CD4-positive, alpha-beta T cell (primary cell): ENCODE measurements at regions of chr17 and their contacts with region 1.

Region 1: GRCh38 chr17:75855310-75856081 is at the start of gene WBP2:
- DNase-seq: peak; percentile 92 to 100 (median 95)
- ATAC-seq: peak; percentile 91
- H3K4me3 ChIP-seq: peak within 1 kb of the TSS; percentile 82
- H3K4me3 Mint-ChIP-seq: peak within 1 kb of the TSS; percentile 90
- H3K27ac ChIP-seq: peak within 1 kb of the TSS; percentile 87 to 90
- H3K27ac Mint-ChIP-seq: no peak within 1 kb of the TSS
- H3K4me1 ChIP-seq: peaks cover 45% of the 10 kb centered on the region
- H3K4me1 Mint-ChIP-seq: peaks cover 29% of the 10 kb centered on the region
- H3K27me3 ChIP-seq: no peaks in the 10 kb centered on the region
- H3K27me3 Mint-ChIP-seq: no peaks in the 10 kb centered on the region
- CTCF ChIP-seq: peak; percentile 53
- total RNA-seq, gene WBP2: 98.5 to 114 TPM

Region 2: DNA sequence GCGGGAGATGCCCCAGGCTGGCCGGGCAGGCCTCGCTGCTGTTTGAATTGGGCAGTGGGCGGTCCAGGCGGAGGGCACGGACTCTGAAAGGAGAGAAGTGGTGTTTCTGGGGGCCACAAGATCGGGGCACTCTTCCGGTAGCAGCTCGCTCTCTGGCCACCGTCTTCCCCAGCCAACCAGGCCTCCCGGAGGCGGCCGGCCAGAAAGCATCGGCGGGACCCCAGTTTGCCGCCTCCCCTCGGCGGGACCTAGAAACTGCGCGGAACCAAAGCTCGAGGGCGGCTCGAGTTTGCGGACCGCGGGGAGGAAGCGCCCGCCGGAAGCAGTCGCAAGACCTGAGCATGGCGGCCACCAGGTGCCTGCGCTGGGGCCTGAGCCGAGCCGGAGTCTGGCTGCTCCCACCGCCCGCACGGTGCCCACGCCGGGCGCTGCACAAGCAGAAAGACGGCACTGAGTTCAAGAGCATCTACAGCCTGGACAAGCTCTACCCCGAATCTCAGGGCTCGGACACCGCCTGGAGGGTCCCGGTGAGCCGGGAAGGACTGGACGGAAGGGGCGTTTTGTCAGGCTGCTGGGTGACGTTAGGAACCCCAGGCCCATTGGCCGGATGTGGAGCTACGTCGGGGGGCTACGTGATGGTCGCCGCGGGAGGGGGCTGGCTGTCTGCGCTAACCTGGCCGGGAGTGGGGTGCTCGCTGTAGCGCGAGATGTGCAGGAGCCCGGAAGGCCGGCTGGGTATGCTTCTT is 843.0 kb before region 1 on chr17 and contains the start of gene MRPL58:
- CTCF ChIA-PET with region 1: no interaction called
- POLR2A ChIA-PET with region 1: no interaction called
- intact Hi-C with region 1: no loop called
- DNase-seq: peak; percentile 62 to 90 (median 75)
- ATAC-seq: peak; percentile 97
- H3K4me3 ChIP-seq: peak within 1 kb of the TSS; percentile 95
- H3K4me3 Mint-ChIP-seq: peak within 1 kb of the TSS; percentile 96
- H3K27ac ChIP-seq: peak within 1 kb of the TSS; percentile 7 to 52
- H3K27ac Mint-ChIP-seq: peak within 1 kb of the TSS; percentile 85
- H3K4me1 ChIP-seq: peaks cover 18% of the 10 kb centered on the region
- H3K4me1 Mint-ChIP-seq: peaks cover 35% of the 10 kb centered on the region
- H3K27me3 ChIP-seq: no peaks in the 10 kb centered on the region
- H3K27me3 Mint-ChIP-seq: no peaks in the 10 kb centered on the region
- CTCF ChIP-seq: peak; percentile 75
- total RNA-seq, gene MRPL58: 5.4 to 7.1 TPM

Region 3: DNA sequence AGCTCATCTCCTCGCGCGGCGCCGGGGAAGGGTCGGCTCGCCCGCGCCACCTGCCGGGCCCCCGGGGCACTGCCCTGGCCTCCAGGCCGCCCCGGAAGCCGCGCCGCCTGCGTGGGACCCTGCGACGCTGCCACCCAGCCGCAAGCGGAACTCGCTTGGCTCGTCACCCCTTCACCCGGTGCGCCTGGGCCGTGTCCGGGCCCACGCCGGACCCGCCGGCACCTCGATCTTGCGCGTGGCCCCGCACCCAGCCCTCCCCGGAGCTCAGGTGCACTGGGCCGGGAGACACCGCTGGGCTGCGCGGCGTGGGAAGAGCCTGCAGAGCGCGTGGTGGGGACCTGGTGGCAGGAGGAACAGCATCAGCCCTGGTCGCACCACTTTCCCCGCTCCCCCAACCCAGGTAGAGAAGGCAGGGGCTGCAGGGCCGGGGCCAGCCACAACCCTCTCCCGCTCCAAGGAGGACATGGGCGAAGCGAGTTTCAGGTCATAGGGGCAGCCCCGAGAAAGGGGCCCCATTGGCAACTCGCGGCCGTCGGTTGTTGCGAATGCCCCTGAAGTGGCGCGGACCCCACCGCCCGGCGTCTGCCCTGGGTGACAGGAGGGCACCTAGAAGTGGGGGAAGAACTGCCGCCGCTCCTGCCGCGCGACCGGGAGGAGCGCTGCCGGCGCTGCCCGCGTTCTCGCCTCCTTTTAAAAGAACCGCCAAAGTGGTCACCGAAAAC is 584.1 kb before region 1 on chr17:
- CTCF ChIA-PET with region 1: no interaction called
- POLR2A ChIA-PET with region 1: no interaction called
- intact Hi-C with region 1: no loop called
- DNase-seq: peak; percentile 70 to 96 (median 86)
- ATAC-seq: peak; percentile 90
- H3K4me3 ChIP-seq: peak overlapping the region; percentile 95
- H3K4me3 Mint-ChIP-seq: peak overlapping the region; percentile 84
- H3K27ac ChIP-seq: peak overlapping the region; percentile 78 to 85
- H3K27ac Mint-ChIP-seq: peak overlapping the region; percentile 48
- H3K4me1 ChIP-seq: peaks cover 40% of the 10 kb centered on the region
- H3K4me1 Mint-ChIP-seq: peaks cover 21% of the 10 kb centered on the region
- H3K27me3 ChIP-seq: no peaks in the 10 kb centered on the region
- H3K27me3 Mint-ChIP-seq: no peaks in the 10 kb centered on the region
- CTCF ChIP-seq: peak; percentile 54

Region 4: GRCh38 chr17:75524953-75525719 is 330.4 kb before region 1 on chr17 and contains the start of gene LLGL2:
- CTCF ChIA-PET with region 1: no interaction called
- POLR2A ChIA-PET with region 1: interaction called, 3 read pairs
- intact Hi-C with region 1: loop called in 1 of 2 experiments (anchors 10 kb)
- DNase-seq: peak; percentile 68 to 96 (median 84)
- ATAC-seq: peak; percentile 91
- H3K4me3 ChIP-seq: peak within 1 kb of the TSS; percentile 64
- H3K4me3 Mint-ChIP-seq: peak within 1 kb of the TSS; percentile 82
- H3K27ac ChIP-seq: no peak within 1 kb of the TSS
- H3K27ac Mint-ChIP-seq: no peak within 1 kb of the TSS
- H3K4me1 ChIP-seq: peaks cover 28% of the 10 kb centered on the region
- H3K4me1 Mint-ChIP-seq: peaks cover 24% of the 10 kb centered on the region
- H3K27me3 ChIP-seq: no peaks in the 10 kb centered on the region
- H3K27me3 Mint-ChIP-seq: no peaks in the 10 kb centered on the region
- CTCF ChIP-seq: peak; percentile 44
- total RNA-seq, gene LLGL2: 31.2 to 34.2 TPM

Region 5: GRCh38 chr17:75639771-75640316 is 215.7 kb before region 1 on chr17:
- CTCF ChIA-PET with region 1: no interaction called
- POLR2A ChIA-PET with region 1: no interaction called
- intact Hi-C with region 1: no loop called
- DNase-seq: no peak
- ATAC-seq: no peak
- H3K4me3 ChIP-seq: no peak overlapping the region
- H3K4me3 Mint-ChIP-seq: no peak overlapping the region
- H3K27ac ChIP-seq: no peak overlapping the region
- H3K27ac Mint-ChIP-seq: no peak overlapping the region
- H3K4me1 ChIP-seq: no peaks in the 10 kb centered on the region
- H3K4me1 Mint-ChIP-seq: no peaks in the 10 kb centered on the region
- H3K27me3 ChIP-seq: no peaks in the 10 kb centered on the region
- H3K27me3 Mint-ChIP-seq: no peaks in the 10 kb centered on the region
- CTCF ChIP-seq: no peak

Region 6: DNA sequence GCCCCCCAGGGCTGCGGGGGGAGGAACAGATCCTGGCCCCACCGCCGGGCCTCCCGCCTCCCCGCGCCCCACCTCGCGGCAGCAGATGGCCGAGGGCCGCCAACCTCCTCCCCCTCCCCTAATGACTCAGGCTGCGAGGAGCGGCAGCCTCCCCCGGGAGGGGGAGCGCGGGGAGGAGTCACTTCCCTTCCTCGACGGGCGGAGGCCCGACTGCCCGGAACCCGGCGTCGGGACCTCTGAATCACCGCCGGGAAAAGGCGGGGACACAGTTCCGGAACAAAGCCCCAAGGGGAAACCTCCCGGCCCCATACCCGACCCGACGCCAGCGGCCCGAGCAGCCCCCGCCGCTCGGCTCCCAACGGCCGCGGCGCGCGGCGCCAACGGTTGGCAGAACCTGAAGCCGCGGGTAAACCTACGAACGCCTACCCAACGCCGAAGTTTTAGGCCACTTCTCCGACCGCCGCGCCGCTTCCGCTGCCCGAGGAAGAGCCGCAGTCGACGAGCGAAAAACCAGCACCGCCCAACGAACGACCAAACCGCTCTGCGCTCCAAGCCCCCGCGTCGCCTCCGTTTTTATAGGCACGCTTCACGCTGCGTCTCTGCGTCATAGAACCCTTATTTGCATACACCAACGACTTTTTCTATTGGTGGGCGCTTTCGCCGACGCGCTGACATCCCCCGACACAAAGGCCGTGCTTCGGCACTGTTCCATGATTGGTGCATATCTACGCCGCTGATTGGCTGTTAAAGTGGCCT is 76.1 kb before region 1 on chr17:
- CTCF ChIA-PET with region 1: interaction called, 9 read pairs
- POLR2A ChIA-PET with region 1: interaction called, 128 read pairs
- intact Hi-C with region 1: loop called (anchors 1 to 2 kb)
- DNase-seq: peak; percentile 86 to 99 (median 95)
- ATAC-seq: peak; percentile 64
- H3K4me3 ChIP-seq: peak overlapping the region; percentile 79
- H3K4me3 Mint-ChIP-seq: peak overlapping the region; percentile 97
- H3K27ac ChIP-seq: peak overlapping the region; percentile 93 to 95
- H3K27ac Mint-ChIP-seq: peak overlapping the region; percentile 97
- H3K4me1 ChIP-seq: peaks cover 27% of the 10 kb centered on the region
- H3K4me1 Mint-ChIP-seq: peaks cover 60% of the 10 kb centered on the region
- H3K27me3 ChIP-seq: no peaks in the 10 kb centered on the region
- H3K27me3 Mint-ChIP-seq: peaks cover 5% of the 10 kb centered on the region
- CTCF ChIP-seq: no peak

Region 7: DNA sequence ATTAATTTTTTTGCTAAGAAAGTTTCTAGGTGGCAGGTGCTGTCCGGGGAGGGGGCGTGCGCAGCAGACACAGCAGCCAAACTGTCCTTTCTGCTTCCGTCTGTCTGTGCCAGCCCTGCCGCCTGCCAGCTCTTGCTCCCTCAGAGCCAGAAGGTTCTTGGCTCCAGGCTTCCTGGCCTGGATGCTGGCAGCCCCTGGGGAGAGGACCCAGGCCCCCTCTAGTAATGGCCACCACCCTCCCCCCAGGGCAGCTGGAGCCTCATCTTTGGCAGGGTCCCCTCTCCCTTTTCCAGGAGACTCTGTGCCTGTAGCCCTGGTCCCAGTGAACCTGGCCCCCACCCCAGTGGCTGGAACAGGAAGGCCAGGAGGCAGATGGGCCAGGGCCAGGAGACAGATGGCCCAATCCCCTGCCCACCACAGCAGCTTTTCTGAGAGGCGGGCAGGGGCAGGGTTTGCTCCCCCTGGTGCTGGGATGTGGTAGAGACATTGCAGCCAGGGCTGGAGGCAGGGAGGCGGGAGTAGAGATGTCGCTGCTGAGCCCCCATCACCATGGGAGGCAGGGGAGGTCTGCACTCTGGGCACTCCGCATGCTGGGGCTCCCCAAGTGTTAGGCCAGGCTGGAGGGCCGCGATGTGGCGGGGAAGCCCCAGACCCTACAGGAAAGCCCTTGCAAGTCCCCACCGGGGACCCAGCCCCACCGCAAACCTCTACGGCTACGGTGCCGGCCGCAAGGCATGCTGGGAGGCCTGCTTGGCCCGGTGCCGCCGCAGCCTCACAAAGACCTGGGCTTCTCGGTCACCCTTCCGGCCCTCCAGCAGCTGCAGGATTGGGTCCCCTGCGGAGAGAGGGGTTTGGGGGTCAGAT is 28.0 kb before region 1 on chr17:
- CTCF ChIA-PET with region 1: interaction called, 4 read pairs
- POLR2A ChIA-PET with region 1: interaction called, 25 read pairs
- intact Hi-C with region 1: no loop called
- DNase-seq: peak; percentile 30 to 85 (median 61)
- ATAC-seq: peak; percentile 76
- H3K4me3 ChIP-seq: peak overlapping the region; percentile 32
- H3K4me3 Mint-ChIP-seq: peak overlapping the region; percentile 34
- H3K27ac ChIP-seq: peak overlapping the region; percentile 39 to 46
- H3K27ac Mint-ChIP-seq: peak overlapping the region; percentile 86
- H3K4me1 ChIP-seq: peaks cover 46% of the 10 kb centered on the region
- H3K4me1 Mint-ChIP-seq: peaks cover 17% of the 10 kb centered on the region
- H3K27me3 ChIP-seq: no peaks in the 10 kb centered on the region
- H3K27me3 Mint-ChIP-seq: no peaks in the 10 kb centered on the region
- CTCF ChIP-seq: peak; percentile 84

Region 8: GRCh38 chr17:75877752-75878173 is 22.3 kb after region 1 on chr17:
- CTCF ChIA-PET with region 1: interaction called, 20 read pairs
- POLR2A ChIA-PET with region 1: interaction called, 230 read pairs
- intact Hi-C with region 1: loop called in 1 of 2 experiments (anchors 2 kb)
- DNase-seq: peak; percentile 52 to 90 (median 66)
- ATAC-seq: peak; percentile 72
- H3K4me3 ChIP-seq: peak overlapping the region; percentile 60
- H3K4me3 Mint-ChIP-seq: peak overlapping the region; percentile 91
- H3K27ac ChIP-seq: peak overlapping the region; percentile 15 to 66
- H3K27ac Mint-ChIP-seq: peak overlapping the region; percentile 91
- H3K4me1 ChIP-seq: peaks cover 64% of the 10 kb centered on the region
- H3K4me1 Mint-ChIP-seq: peaks cover 51% of the 10 kb centered on the region
- H3K27me3 ChIP-seq: no peaks in the 10 kb centered on the region
- H3K27me3 Mint-ChIP-seq: no peaks in the 10 kb centered on the region
- CTCF ChIP-seq: peak; percentile 70

Region 9: GRCh38 chr17:75904749-75905521 is 49.4 kb after region 1 on chr17 and contains the start of gene MRPL38:
- CTCF ChIA-PET with region 1: interaction called, 6 read pairs
- POLR2A ChIA-PET with region 1: interaction called, 44 read pairs
- intact Hi-C with region 1: loop called in 1 of 2 experiments (anchors 2 kb)
- DNase-seq: peak; percentile 82 to 97 (median 92)
- ATAC-seq: peak; percentile 95
- H3K4me3 ChIP-seq: peak within 1 kb of the TSS; percentile 82
- H3K4me3 Mint-ChIP-seq: peak within 1 kb of the TSS; percentile 94
- H3K27ac ChIP-seq: peak within 1 kb of the TSS; percentile 73 to 76
- H3K27ac Mint-ChIP-seq: peak within 1 kb of the TSS; percentile 85
- H3K4me1 ChIP-seq: peaks cover 25% of the 10 kb centered on the region
- H3K4me1 Mint-ChIP-seq: no peaks in the 10 kb centered on the region
- H3K27me3 ChIP-seq: no peaks in the 10 kb centered on the region
- H3K27me3 Mint-ChIP-seq: no peaks in the 10 kb centered on the region
- CTCF ChIP-seq: peak; percentile 99
- total RNA-seq, gene MRPL38: 146 to 147 TPM